Astrocyte of the cerebellum (primary cell): ENCODE measurements at regions of chr19 and their contacts with region 1.

Region 1: DNA sequence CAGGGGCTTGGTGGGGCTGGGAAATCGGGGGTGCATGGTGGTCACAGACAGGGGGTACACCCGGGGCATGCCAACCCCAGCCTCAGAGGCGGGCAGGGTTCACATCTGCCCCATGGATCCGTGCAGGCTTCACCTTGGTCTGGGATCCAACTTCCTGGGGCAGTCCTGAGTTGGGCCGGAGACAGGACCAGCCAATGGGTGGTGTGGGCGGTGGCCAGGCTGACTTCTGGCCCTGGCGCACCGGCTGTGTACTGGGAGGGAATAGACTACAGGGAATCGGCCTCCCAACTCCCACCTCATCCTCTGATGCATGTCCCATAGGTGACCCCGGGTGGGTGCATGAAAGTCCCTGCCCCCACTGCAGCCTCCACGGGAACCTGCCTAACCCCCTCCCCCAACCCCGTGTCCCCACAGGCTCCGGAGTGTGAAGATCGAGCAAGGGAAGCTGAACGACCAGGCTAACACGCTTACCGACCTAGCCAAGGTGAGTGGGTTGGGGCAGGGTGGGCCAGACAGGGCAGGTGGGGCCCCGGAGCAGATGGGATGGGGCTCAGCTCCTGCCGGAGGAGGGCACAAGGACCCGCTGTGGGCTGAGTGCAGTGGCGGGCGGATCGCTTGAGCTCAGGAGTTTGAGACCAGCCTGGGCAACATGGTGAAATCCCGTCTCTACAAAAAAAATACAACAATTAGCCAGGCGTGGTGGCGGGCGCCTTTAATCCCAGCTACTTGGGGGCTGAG is 14.7 kb upstream of the ARRDC2 start:
- DNase-seq: no peak
- H3K4me3 ChIP-seq: no peak overlapping the region
- CTCF ChIP-seq: no peak

Region 2: DNA sequence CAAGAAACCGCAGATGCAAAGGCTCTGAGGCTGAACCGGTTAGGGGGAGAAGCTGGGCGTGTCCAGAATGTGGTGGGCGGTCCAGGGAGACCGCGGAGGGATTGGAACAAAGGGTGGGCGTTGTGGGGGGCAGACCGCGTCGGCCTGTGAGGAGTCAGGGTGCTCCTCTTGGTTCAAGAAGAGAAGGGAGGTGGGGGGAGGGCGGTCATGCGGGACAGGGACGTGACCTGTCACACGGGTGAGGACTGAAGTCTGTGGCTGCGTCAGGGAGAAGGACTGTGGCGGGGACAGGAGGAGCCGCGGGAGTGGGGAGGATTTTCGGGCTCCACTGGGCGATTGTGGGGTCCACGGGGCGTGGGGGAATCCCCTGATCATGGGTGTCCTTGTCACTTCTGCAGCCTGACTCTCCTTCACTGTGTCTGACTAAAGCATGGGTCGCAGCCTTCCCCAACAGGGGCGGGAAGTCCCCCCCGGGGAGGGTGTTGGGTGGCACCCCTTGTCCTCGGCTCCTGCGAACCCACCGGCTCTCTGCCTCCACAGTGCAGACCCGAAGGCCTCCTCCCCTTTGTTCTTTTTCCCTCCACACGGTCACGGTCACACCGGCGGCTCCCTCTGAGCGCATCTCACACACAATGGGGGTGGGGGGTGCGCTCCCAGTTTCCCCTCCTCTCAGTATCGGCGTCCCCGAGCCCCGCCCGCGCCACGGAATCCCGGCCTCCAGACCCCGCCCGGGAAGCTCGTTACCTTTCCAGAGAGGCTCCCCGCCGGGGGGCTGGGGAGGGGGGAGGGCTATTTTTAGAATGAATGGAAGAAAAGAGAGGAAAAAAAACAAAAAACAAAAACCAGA is 42.7 kb before region 1 on chr19:
- in situ Hi-C with region 1: loop called (anchors 5 kb)
- DNase-seq: no peak
- H3K4me3 ChIP-seq: no peak overlapping the region
- CTCF ChIP-seq: no peak

Region 3: GRCh38 chr19:18029617-18030338 is 36.5 kb after region 1 on chr19:
- in situ Hi-C with region 1: no loop called
- DNase-seq: no peak
- H3K4me3 ChIP-seq: no peak overlapping the region
- CTCF ChIP-seq: no peak

Region 4: GRCh38 chr19:18049385-18049784 is 56.1 kb after region 1 on chr19:
- in situ Hi-C with region 1: no loop called
- DNase-seq: no peak
- H3K4me3 ChIP-seq: no peak overlapping the region
- CTCF ChIP-seq: no peak